Activated CD4-positive, alpha-beta T cell treated with anti-CD3 and anti-CD28 coated beads, Interleukin-2, amount 10 ng/mL, durations not matched to agents 24 days and 14 days (primary cell): ENCODE measurements at regions of chr14 and their contacts with region 1.

Region 1: GRCh38 chr14:102086972-102087761 is at the start of gene HSP90AA1:
- DNase-seq: peak; percentile 98
- H3K4me3 Mint-ChIP-seq: peak within 1 kb of the TSS; percentile 92
- H3K27ac Mint-ChIP-seq: peak within 1 kb of the TSS; percentile 98
- H3K4me1 Mint-ChIP-seq: peaks cover 59% of the 10 kb centered on the region
- H3K27me3 Mint-ChIP-seq: no peaks in the 10 kb centered on the region
- total RNA-seq, gene HSP90AA1: 1,216 and 1,268 TPM in 2 replicates

Region 2: DNA sequence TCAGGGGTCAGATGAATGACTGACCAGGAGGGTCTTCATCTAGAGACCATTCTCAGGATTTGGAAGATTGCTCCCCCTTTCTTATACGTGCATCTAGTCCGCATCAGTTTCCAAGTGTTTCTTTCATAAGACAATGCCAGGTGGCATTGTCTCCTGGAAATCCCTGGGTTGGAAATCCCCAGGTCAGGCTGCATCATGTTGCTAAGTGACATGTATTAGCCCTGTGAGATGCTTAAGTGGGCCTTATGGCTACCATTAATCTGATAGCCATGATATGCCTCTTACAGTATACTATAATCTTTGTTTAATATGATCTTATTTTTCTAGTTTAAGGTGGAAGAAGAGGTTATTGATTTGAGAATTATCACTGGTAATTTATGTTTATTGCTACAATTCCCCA is 433.1 kb before region 1 on chr14:
- intact Hi-C with region 1: no loop called
- DNase-seq: no peak
- H3K4me3 Mint-ChIP-seq: no peak overlapping the region
- H3K27ac Mint-ChIP-seq: no peak overlapping the region
- H3K4me1 Mint-ChIP-seq: peaks cover 4% of the 10 kb centered on the region
- H3K27me3 Mint-ChIP-seq: peaks cover 63% of the 10 kb centered on the region

Region 3: DNA sequence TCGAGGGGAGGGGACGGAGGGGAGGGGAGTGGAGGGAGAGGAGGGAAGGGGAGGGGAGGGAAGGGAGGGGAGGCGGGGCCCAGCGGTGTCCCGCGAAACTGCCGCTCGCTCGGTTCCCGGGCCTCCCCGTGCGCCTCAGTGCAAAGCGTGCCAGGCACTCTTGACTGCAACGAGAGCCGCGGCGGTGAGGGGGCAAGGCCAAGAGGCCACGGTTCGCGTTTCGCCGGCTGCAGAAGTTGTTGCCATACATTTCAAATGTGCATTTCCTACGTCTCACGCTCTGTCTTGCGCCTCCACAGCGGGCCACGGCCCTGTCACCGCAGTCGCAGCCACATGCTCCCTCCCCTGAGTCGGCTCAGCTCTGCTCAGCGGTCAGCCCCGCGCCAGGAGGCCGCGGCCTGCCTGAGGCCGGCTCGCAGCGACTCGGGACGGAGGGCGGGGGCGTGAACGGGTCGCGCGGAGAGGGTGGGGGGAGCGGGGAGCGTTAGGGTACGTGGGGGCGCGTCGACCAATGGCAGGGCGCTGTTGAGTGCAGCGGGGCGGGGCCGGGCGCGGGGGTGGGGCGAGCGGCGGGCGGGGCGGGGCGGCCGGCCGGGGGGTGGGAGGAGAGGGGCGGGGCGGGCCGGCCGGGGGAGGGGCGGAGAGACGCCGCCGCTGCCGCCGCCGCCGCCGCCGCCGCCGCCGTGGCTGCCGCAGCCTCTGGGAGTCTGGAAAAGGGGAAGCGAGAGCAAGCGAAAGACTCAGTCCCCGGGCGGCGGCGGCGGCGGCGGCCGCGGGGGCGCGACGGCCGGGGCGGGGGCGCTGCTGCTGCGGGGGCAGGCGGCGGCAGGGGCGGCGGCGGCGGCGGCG is 325.9 kb before region 1 on chr14 and contains the start of gene PPP2R5C:
- intact Hi-C with region 1: loop called (anchors 2 kb)
- DNase-seq: peak; percentile 94
- H3K4me3 Mint-ChIP-seq: peak within 1 kb of the TSS; percentile 90
- H3K27ac Mint-ChIP-seq: peak within 1 kb of the TSS; percentile 86
- H3K4me1 Mint-ChIP-seq: peaks cover 39% of the 10 kb centered on the region
- H3K27me3 Mint-ChIP-seq: peaks cover 3% of the 10 kb centered on the region
- total RNA-seq, gene PPP2R5C: 160 and 181 TPM in 2 replicates

Region 4: DNA sequence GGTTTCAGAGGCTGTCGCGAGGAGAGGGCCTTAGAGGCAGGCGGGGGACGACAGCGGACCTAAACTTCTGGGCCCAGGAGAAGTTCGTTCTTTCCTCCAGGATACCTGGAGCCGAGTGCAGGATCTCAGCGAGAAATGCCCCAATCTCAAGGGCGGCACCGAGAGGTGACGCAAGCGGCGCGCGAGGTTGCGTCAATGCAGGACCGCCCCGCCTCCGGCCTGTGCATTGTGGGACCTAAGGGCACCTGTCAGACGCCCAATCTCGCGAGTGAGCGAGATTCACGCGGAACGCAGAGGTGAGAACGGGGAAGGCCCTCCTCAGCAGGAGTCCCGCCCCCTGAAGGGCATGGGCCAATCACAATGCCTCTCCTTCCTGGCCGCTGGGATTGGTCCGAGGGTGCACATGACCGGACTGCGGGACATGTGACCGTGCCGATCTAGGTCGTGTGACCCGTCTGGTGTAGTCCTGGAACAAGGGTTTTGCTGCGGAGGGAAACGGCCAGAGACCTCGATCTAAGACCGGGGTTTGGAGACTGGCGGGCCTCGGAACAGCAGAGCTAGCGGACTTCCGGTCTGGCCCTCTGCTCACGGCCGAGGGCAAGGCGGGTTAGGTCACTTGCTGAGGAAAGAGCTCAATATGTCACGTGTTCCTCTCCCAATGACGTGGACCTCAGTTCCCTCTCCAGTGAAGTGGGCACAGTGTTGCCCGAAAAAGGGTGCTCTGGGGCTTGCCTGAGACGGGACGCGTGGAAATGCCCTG is 139.1 kb before region 1 on chr14:
- intact Hi-C with region 1: loop called (anchors 5 kb)
- DNase-seq: peak; percentile 100
- H3K4me3 Mint-ChIP-seq: peak overlapping the region; percentile 95
- H3K27ac Mint-ChIP-seq: peak overlapping the region; percentile 97
- H3K4me1 Mint-ChIP-seq: peaks cover 17% of the 10 kb centered on the region
- H3K27me3 Mint-ChIP-seq: peaks cover 22% of the 10 kb centered on the region

Region 5: DNA sequence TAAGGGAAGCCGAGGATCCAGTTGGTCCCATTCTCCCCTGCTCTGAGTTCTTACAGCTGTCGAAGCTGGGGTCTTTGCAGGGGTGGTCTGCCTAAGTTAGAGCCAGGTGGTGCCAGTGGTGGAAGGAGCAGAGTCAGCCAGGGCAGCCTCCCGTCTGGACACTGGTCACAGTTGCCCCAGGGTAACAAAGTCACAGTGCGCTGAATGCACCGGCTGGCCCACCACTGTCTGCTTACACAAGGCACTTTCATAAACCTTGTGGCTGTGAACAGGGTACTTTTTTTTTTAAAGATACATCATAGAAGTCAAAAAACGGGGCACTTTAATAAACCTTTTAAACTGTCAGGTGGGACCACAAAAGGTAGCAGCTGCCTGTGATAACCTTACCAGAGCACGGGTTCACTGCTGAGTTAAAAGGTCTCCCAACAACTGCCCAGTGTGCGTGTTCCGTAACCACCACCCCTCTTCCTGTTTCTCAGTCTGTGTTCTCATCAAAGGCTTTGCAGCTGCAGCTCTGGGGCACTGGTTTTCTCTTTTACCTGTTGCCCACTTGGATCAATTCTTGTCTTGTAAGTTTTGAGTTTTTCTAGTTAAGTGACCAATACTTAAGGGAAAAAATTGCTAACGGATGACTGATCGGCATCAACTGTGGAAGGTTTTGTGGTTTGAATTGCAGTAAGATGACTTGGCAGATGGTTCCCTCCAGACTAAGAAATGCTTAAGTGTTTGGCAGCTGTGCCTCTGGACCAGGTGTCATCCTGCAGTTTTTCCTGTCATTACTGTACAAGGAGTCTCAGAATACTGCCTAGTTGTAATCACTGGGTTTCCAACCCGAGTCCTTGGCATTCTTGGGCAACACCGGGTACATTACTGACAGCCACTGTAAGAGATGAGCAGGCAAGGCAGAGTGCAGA is 66.9 kb before region 1 on chr14:
- intact Hi-C with region 1: loop called (anchors 2 kb)
- DNase-seq: peak; percentile 85
- H3K4me3 Mint-ChIP-seq: peak overlapping the region; percentile 54
- H3K27ac Mint-ChIP-seq: peak overlapping the region; percentile 88
- H3K4me1 Mint-ChIP-seq: peaks cover 22% of the 10 kb centered on the region
- H3K27me3 Mint-ChIP-seq: no peaks in the 10 kb centered on the region

Region 6: GRCh38 chr14:102139248-102140026 is 52.3 kb after region 1 on chr14 and contains the start of gene WDR20:
- intact Hi-C with region 1: loop called (anchors 1 kb)
- DNase-seq: peak; percentile 100
- H3K4me3 Mint-ChIP-seq: peak within 1 kb of the TSS; percentile 97
- H3K27ac Mint-ChIP-seq: peak within 1 kb of the TSS; percentile 95
- H3K4me1 Mint-ChIP-seq: peaks cover 21% of the 10 kb centered on the region
- H3K27me3 Mint-ChIP-seq: no peaks in the 10 kb centered on the region
- total RNA-seq, gene WDR20: 30.4 and 31.0 TPM in 2 replicates

Region 7: DNA sequence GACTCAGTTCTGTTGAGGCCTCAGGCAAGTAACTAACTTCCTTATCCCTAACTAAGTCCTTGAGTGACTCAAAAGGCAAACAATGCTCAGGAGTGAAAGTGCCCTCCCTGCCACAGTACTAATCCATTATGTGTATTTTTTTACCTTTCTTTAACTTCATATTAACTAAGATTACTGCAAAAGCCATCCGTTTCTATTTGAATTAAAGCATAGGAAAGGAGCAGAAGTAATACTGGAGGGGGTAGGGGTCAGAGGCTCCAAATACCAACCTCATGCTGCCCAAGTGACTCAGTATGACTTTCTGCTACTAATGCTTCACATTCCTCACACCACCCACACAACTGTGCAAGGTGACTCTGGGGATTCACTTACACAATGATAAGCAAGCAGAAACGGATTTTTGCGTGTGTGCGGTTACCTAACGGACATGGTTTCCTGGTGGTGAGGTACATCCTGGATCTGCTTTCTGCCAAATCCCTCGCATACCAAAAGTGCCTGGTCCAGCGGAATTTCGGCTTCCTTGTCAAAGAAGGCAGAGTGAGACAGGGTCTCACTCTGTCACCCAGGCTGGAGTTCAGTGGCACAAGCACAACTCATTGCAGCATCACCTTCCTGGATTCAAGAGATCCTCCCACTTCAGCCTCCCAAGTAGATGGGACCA is 192.7 kb after region 1 on chr14:
- intact Hi-C with region 1: no loop called
- DNase-seq: no peak
- H3K4me3 Mint-ChIP-seq: no peak overlapping the region
- H3K27ac Mint-ChIP-seq: no peak overlapping the region
- H3K4me1 Mint-ChIP-seq: no peaks in the 10 kb centered on the region
- H3K27me3 Mint-ChIP-seq: no peaks in the 10 kb centered on the region

Region 8: DNA sequence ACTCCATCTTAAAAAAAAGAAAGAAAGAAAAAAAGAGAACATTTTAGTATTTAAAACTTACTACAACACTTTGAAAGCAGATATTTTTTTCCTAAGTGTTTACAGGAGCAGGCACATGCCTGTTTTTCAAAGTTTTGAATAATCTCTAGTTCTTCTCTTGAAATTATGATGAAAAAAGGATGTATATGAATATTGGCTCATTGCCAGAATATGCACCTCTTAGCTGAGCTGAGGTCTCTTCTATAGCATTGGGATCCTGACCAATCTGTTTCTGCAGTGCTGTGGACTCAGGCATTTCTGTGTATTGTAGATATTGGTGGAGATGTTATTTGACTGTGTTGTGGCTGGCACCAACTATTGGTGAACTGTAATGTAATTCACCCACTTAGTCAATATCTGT is 290.5 kb after region 1 on chr14:
- intact Hi-C with region 1: no loop called
- DNase-seq: no peak
- H3K4me3 Mint-ChIP-seq: no peak overlapping the region
- H3K27ac Mint-ChIP-seq: no peak overlapping the region
- H3K4me1 Mint-ChIP-seq: peaks cover 21% of the 10 kb centered on the region
- H3K27me3 Mint-ChIP-seq: no peaks in the 10 kb centered on the region

Region 9: DNA sequence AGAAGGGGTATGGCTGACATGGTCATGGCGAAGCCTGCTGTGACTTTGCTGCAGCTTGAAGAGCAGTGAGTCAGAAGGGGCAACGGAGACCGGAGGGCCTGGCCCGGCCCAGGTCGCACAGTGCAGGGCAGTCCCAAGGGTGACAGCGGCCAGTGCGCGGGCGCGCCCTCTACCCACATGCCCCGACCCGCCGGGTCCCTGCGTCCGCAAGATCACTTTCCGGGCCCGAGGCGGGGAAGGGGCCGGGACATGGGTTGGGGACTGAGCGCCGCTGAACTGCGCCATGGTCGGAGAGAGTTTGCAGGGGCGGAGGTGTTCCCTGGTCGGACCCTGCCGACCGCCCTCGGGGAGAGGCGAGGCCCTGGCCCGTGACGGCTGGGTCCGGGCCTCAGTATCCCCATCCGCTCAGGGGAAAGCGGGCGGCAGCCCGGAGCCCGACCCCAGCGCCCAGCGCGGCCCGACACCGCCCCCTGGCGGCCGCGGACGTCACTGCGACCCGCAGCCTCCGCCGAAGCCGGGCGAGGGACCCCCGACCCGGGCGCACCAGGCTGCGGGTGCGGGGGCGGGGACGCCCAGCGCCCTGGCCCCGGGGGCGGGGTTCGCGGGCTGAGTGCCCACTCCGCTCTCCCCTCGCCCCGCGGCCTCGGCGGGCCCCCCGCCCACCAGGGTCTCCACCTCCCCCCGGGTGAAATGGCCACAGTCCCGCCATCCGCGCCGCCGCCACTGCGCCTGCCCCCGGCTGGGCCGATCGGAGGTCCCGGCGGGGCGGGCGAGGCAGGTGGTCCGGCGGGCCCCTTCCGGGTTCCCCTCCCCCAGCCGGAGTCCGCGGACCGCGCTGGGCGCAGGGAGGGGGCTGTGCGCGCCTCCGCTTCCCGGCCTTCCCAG is 429.6 kb after region 1 on chr14:
- intact Hi-C with region 1: loop called (anchors 5 kb)
- DNase-seq: peak; percentile 93
- H3K4me3 Mint-ChIP-seq: peak overlapping the region; percentile 82
- H3K27ac Mint-ChIP-seq: peak overlapping the region; percentile 68
- H3K4me1 Mint-ChIP-seq: peaks cover 4% of the 10 kb centered on the region
- H3K27me3 Mint-ChIP-seq: peaks cover 10% of the 10 kb centered on the region

Region 10: GRCh38 chr14:103385152-103385993 is 1298.2 kb after region 1 on chr14 and contains the start of gene MARK3:
- intact Hi-C with region 1: no loop called
- DNase-seq: peak; percentile 99
- H3K4me3 Mint-ChIP-seq: peak within 1 kb of the TSS; percentile 94
- H3K27ac Mint-ChIP-seq: peak within 1 kb of the TSS; percentile 96
- H3K4me1 Mint-ChIP-seq: peaks cover 33% of the 10 kb centered on the region
- H3K27me3 Mint-ChIP-seq: peaks cover 6% of the 10 kb centered on the region
- total RNA-seq, gene MARK3: 82.0 and 89.7 TPM in 2 replicates